ENCODE measurements at regions of chr3 and their contacts with region 1.

Region 1: DNA sequence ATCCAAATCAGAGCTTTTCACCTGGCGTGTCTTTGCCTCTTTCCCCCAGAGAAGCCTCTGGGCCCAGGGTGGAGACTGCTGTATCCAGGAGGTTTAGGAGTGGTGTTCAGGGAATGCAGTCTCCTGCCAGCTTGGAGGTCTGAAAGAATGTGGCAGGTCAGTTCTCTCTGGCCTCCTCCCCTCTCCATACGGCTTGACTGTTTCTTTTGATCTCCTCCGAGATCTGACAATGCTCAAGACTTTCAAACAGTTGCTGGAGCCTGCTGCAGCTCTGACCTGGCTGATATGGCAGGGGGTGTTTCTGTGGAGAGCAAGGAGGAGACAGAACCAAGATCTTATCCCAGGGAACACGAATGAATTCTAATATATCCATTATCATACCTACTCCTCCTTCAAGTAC is 24.7 kb upstream of the TM4SF4 start:
- DNase-seq: no peak
- ATAC-seq: peak; percentile 46
- H3K4me3 ChIP-seq: no peak overlapping the region
- H3K27ac ChIP-seq: peak overlapping the region in 1 of 2 donors; percentile 18
- H3K4me1 ChIP-seq: peaks cover 0 to 2% of the 10 kb centered on the region in 2 donors
- H3K27me3 ChIP-seq: no peaks in the 10 kb centered on the region

Region 2: DNA sequence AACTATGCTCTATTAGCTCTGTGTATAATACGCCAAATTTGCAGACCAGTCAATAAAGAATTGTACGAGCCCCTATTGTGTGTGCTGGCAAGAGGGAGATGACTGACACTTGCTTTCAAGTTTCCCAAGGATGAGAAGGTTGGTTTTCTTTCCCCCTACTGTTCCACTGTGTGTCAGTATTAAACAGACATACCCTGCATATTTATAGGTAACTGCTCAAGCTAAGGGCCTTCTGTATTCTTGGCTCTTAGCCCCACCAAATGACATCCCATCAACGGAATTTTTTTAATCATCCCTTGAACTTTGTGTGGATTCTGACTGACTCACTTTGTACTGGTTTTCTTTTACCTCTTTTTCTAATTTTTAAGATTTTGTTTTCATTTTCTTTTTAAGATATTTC is 519.0 kb before region 1 on chr3:
- intact Hi-C with region 1: no loop called
- DNase-seq: no peak
- ATAC-seq: no peak
- H3K4me3 ChIP-seq: no peak overlapping the region
- H3K27ac ChIP-seq: no peak overlapping the region
- H3K4me1 ChIP-seq: no peaks in the 10 kb centered on the region
- H3K27me3 ChIP-seq: peaks cover 0 to 2% of the 10 kb centered on the region in 2 donors

Region 3: DNA sequence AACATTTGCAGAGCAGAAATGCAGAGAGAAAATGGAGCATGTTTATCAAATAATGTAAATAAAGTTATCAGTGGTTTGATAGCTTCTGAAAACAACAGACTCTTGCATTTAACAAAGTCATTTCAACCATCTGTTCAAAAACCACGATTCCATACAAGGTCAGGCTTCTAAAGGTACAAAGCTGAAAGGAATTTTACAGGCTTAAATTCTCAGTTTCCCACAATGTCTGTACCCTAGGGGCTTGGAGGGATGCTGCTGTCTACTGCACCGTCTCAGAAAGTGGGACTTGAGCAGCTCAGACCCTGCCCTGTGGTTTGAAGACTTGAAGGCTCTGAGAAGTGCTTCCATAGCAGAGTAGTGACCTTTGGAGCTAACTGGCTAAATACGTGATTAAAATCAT is 41.9 kb before region 1 on chr3:
- intact Hi-C with region 1: loop called in 1 of 2 experiments (anchors 5 kb)
- DNase-seq: no peak
- ATAC-seq: no peak
- H3K4me3 ChIP-seq: no peak overlapping the region
- H3K27ac ChIP-seq: no peak overlapping the region
- H3K4me1 ChIP-seq: peaks cover 0 to 2% of the 10 kb centered on the region in 2 donors
- H3K27me3 ChIP-seq: no peaks in the 10 kb centered on the region

Measured in aorta (tissue), 5 donors.